HCT116 (cell line): ENCODE measurements at regions of chr1 and their contacts with region 1.

Region 1: DNA sequence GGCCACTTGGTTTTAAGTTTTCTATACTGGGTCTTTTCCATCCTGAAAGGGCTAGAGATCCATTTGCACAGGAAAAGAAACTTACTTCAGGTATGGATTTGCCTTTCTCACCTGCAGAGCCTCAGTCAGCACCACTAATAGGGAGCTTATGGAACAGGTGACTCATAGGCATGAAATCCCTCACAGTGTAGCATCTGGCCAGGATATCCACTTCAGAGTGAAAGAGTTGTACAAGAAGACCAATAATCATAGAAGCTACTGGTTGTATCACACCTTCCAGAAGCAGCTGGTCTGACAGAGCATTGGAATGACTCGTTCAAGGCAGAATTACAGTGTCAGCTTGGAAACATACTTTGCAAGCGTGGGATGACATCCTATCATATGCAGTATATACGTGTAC is 26.3 kb upstream of the SYT14 start:
- DNase-seq: no peak
- ATAC-seq: no peak
- H3K4me3 ChIP-seq: no peak overlapping the region
- H3K27ac ChIP-seq: no peak overlapping the region
- H3K4me1 ChIP-seq: no peaks in the 10 kb centered on the region
- H3K27me3 ChIP-seq: no peaks in the 10 kb centered on the region
- CTCF ChIP-seq: no peak
- POLR2A ChIP-seq: no peak
- RAD21 ChIP-seq: no peak

Region 2: GRCh38 chr1:209965996-209966395 is 54.2 kb after region 1 on chr1:
- CTCF ChIA-PET with region 1: no interaction called
- POLR2A ChIA-PET with region 1: no interaction called
- RAD21 ChIA-PET with region 1: no interaction called
- intact Hi-C with region 1: loop called (anchors 5 kb)
- DNase-seq: no peak
- ATAC-seq: no peak
- H3K4me3 ChIP-seq: no peak overlapping the region
- H3K27ac ChIP-seq: no peak overlapping the region
- H3K4me1 ChIP-seq: no peaks in the 10 kb centered on the region
- H3K27me3 ChIP-seq: peaks cover 25% of the 10 kb centered on the region
- CTCF ChIP-seq: no peak
- POLR2A ChIP-seq: no peak
- RAD21 ChIP-seq: no peak